Ascending aorta (tissue), 2 donors: ENCODE measurements at regions of chr5 and their contacts with region 1.

Region 1: DNA sequence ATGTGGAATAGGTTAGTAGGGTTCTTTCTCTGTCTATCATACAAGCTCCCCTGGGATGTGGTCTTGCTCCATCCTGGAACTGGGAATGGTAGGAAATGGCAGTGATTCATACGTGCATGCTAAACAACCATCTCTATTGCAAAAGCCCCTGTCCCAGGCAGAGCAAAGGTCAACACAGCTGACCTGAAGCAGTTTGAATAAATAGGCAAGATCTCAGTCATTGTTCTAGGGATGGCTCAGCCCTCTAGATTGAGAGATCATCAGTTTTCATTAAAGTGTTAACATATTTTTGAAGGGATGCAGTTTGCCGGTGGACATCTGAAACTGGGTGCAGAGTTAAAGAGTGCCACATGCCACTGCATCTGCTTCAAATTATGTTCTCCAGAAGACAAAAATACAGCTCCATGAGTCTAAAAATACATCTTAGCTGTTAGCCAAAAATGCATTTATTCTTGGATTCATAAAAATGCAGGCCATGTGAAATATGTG is 224.1 kb downstream of the ESM1 start:
- DNase-seq: peak in 1 of 2 donors; percentile 85
- H3K4me3 ChIP-seq: no peak overlapping the region
- H3K27ac ChIP-seq: peak overlapping the region; percentile 52 to 75
- H3K4me1 ChIP-seq: peaks cover 0 to 20% of the 10 kb centered on the region in 2 donors
- H3K27me3 ChIP-seq: no peaks in the 10 kb centered on the region
- CTCF ChIP-seq: no peak

Region 2: GRCh38 chr5:54807421-54807820 is 46.2 kb after region 1 on chr5:
- intact Hi-C with region 1: loop called (anchors 5 kb)
- DNase-seq: no peak
- H3K4me3 ChIP-seq: no peak overlapping the region
- H3K27ac ChIP-seq: peak overlapping the region; percentile 31 to 39
- H3K4me1 ChIP-seq: peaks cover 0 to 10% of the 10 kb centered on the region in 2 donors
- H3K27me3 ChIP-seq: no peaks in the 10 kb centered on the region
- CTCF ChIP-seq: no peak

Region 3: GRCh38 chr5:54832858-54833257 is 71.6 kb after region 1 on chr5:
- intact Hi-C with region 1: loop called (anchors 5 kb)
- DNase-seq: no peak
- H3K4me3 ChIP-seq: no peak overlapping the region
- H3K27ac ChIP-seq: no peak overlapping the region
- H3K4me1 ChIP-seq: peaks cover 0 to 6% of the 10 kb centered on the region in 2 donors
- H3K27me3 ChIP-seq: no peaks in the 10 kb centered on the region
- CTCF ChIP-seq: no peak

Region 4: GRCh38 chr5:55081541-55081940 is 320.3 kb after region 1 on chr5:
- intact Hi-C with region 1: no loop called
- DNase-seq: no peak
- H3K4me3 ChIP-seq: no peak overlapping the region
- H3K27ac ChIP-seq: no peak overlapping the region
- H3K4me1 ChIP-seq: no peaks in the 10 kb centered on the region
- H3K27me3 ChIP-seq: no peaks in the 10 kb centered on the region
- CTCF ChIP-seq: no peak

Region 5: DNA sequence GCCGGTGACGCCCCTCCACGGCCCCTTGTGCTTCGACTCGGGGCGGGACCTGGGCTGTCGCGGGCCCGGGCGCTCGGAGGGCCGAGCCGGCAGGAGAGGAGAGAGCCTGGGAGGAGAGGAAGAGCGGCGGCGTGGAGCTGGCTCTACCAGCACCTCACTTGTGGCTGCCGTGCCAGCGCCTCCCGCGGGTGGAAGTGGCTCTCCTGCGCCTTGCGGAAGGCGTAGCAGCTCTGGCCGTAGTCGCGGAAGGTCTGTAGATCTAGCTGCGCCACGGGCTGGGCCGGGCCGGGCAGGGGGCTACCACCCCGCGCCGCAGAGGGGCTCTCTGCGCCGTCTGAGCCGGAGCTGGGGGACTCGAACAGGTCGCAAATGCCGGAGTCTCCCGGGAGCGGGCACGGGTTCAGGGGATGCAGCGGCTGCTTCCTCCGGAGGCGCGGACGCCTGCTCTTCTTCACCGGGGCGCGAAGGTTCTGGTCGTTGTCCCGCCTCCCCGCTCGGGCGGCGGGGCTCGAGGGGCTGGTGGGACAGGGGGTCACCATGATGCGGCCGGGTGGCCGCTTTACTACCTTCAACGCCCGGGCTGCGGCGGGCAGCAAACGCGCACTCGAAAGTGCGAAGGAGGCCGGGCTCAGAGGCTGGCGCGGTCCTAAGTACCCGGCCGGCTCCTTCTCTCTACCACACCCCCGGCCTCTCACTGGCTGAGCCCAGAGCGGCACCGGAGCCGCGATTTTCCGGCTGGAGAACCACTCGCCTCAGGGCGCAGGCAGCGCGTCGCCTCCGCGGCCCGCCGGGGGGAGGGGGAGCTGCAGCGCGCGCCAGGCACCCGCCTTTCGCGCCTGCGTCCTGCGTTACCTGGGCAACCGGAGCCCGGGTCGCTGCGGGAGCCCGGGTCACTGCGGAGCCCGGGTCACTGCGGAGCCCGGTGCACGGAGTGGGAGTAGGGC is 472.0 kb after region 1 on chr5 and contains the start of gene CCNO:
- intact Hi-C with region 1: no loop called
- DNase-seq: peak in 1 of 2 donors; percentile 85
- H3K4me3 ChIP-seq: peak within 1 kb of the TSS; percentile 73 to 82
- H3K27ac ChIP-seq: peak within 1 kb of the TSS; percentile 44 to 63
- H3K4me1 ChIP-seq: peaks cover 2 to 18% of the 10 kb centered on the region in 2 donors
- H3K27me3 ChIP-seq: peaks cover 9% of the 10 kb centered on the region
- CTCF ChIP-seq: no peak
- total RNA-seq, gene CCNO: 43.2 TPM